SK-N-SH (cell line): ENCODE measurements at regions of chr21 and their contacts with region 1.

Region 1: GRCh38 chr21:14099570-14099969 is 111.2 kb downstream of the LIPI start:
- DNase-seq: no peak
- H3K4me3 ChIP-seq: no peak overlapping the region
- H3K27ac ChIP-seq: no peak overlapping the region
- H3K4me1 ChIP-seq: no peaks in the 10 kb centered on the region
- H3K27me3 ChIP-seq: no peaks in the 10 kb centered on the region
- CTCF ChIP-seq: no peak
- EP300 ChIP-seq: no peak
- RAD21 ChIP-seq: no peak

Region 2: GRCh38 chr21:14120091-14120734 is 20.6 kb after region 1 on chr21:
- CTCF ChIA-PET with region 1: interaction called, 11 read pairs
- POLR2A ChIA-PET with region 1: no interaction called
- DNase-seq: peak; percentile 25
- H3K4me3 ChIP-seq: peak overlapping the region in 1 of 2 experiments; percentile 53; a peak in 1 of 4 replicates
- H3K27ac ChIP-seq: no peak overlapping the region
- H3K4me1 ChIP-seq: no peaks in the 10 kb centered on the region
- H3K27me3 ChIP-seq: no peaks in the 10 kb centered on the region; the same call in 1 of the 2 replicates
- CTCF ChIP-seq: peak; percentile 73
- EP300 ChIP-seq: no peak
- RAD21 ChIP-seq: peak; percentile 72